ENCODE measurements at regions of chr14 and their contacts with region 1.

Region 1: GRCh38 chr14:50321009-50321660 is 9.0 kb downstream of the DMAC2L start:
- DNase-seq: peak in 1 of 2 donors; percentile 64
- ATAC-seq: peak; percentile 97
- H3K4me3 ChIP-seq: peak overlapping the region; percentile 14 to 82
- H3K27ac ChIP-seq: peak overlapping the region; percentile 57 to 68
- H3K4me1 ChIP-seq: no peaks in the 10 kb centered on the region
- H3K27me3 ChIP-seq: no peaks in the 10 kb centered on the region

Region 2: DNA sequence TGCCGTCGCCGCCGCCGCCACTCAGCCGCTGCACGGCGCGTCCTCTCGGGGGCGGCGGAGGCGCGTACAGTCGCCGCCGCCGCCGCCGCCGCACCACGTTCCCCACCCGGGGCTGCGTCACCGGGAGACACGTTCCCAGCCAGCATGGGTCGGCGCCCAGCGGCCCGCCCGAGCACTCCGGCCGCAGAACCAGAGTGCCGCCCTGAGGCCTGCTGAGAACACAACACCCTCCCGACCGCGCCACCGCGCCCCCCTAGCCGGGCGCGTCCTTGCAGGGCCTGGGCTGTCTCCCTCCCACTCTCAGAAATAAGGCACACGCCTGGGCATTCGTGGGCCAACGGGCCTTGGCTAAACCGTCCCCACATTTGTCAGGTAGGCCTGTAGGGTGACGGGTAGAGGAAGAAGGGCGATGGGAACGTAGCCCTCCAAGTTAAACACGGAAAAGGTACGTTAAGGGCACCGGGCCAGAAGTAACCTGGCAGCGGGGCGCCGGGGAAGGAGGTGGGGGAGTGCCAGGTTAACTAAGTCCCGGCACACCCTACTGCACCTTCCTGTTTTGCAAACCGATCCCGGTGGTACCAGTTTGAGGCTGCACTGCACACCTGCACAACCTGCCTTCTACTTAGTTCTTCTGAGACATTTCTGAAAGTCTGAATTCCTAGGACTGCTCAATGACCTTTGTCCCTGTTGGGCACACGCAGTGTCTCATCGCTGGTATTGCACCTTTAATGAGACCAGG is 211.5 kb after region 1 on chr14 and contains the start of gene MAP4K5:
- intact Hi-C with region 1: loop called (anchors 1 kb)
- DNase-seq: peak; percentile 95 to 97
- ATAC-seq: peak; percentile 99
- H3K4me3 ChIP-seq: peak within 1 kb of the TSS; percentile 65 to 90
- H3K27ac ChIP-seq: peak within 1 kb of the TSS; percentile 10 to 71
- H3K4me1 ChIP-seq: peaks cover 0 to 4% of the 10 kb centered on the region in 2 donors
- H3K27me3 ChIP-seq: no peaks in the 10 kb centered on the region
- total RNA-seq, gene MAP4K5: 53.9 to 67.0 TPM

Measured in aorta (tissue), 5 donors.